OCI-LY7 (cell line): ENCODE measurements at regions of chr11 and their contacts with region 1.

Region 1: GRCh38 chr11:6443269-6444003 is 2.6 kb upstream of the HPX start:
- DNase-seq: peak; percentile 77
- H3K4me3 ChIP-seq: no peak overlapping the region
- H3K27ac ChIP-seq: no peak overlapping the region
- H3K4me1 ChIP-seq: peaks cover 36% of the 10 kb centered on the region
- CTCF ChIP-seq: peak; percentile 94

Region 2: DNA sequence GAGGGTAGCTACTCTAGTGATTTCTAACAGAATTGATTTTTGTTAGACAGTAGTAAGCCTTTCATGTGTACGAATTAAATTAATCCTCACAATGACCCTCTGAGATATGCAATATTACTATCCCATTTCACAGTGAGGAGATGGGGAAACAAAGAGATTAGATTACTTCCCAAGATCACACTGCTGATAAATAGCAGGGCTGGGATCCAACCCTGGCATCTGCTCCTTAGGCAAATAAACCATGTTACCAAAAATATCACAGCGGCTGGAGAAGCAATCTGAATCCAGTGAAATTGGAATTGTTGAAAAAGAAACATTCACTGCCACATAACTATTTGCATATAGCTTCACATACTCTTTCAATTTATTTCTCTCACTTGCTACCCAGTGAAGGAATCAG is 110.3 kb before region 1 on chr11:
- CTCF ChIA-PET with region 1: no interaction called
- POLR2A ChIA-PET with region 1: no interaction called
- intact Hi-C with region 1: no loop called
- DNase-seq: no peak
- H3K4me3 ChIP-seq: no peak overlapping the region
- H3K27ac ChIP-seq: no peak overlapping the region
- H3K4me1 ChIP-seq: no peaks in the 10 kb centered on the region
- CTCF ChIP-seq: no peak

Region 3: GRCh38 chr11:6455070-6455469 is 11.6 kb after region 1 on chr11:
- CTCF ChIA-PET with region 1: interaction called, 9 read pairs
- POLR2A ChIA-PET with region 1: interaction called, 11 read pairs
- intact Hi-C with region 1: no loop called
- DNase-seq: peak; percentile 45
- H3K4me3 ChIP-seq: no peak overlapping the region
- H3K27ac ChIP-seq: peak overlapping the region; percentile 44
- H3K4me1 ChIP-seq: peaks cover 30% of the 10 kb centered on the region
- CTCF ChIP-seq: no peak

Region 4: GRCh38 chr11:6505577-6506240 is 62.3 kb after region 1 on chr11:
- CTCF ChIA-PET with region 1: interaction called, 4 read pairs
- POLR2A ChIA-PET with region 1: interaction called, 3 read pairs
- intact Hi-C with region 1: loop called (anchors 2 kb)
- DNase-seq: peak; percentile 65
- H3K4me3 ChIP-seq: no peak overlapping the region
- H3K27ac ChIP-seq: no peak overlapping the region
- H3K4me1 ChIP-seq: no peaks in the 10 kb centered on the region
- CTCF ChIP-seq: peak; percentile 99